ENCODE measurements at regions of chr7 and their contacts with region 1.

Region 1: DNA sequence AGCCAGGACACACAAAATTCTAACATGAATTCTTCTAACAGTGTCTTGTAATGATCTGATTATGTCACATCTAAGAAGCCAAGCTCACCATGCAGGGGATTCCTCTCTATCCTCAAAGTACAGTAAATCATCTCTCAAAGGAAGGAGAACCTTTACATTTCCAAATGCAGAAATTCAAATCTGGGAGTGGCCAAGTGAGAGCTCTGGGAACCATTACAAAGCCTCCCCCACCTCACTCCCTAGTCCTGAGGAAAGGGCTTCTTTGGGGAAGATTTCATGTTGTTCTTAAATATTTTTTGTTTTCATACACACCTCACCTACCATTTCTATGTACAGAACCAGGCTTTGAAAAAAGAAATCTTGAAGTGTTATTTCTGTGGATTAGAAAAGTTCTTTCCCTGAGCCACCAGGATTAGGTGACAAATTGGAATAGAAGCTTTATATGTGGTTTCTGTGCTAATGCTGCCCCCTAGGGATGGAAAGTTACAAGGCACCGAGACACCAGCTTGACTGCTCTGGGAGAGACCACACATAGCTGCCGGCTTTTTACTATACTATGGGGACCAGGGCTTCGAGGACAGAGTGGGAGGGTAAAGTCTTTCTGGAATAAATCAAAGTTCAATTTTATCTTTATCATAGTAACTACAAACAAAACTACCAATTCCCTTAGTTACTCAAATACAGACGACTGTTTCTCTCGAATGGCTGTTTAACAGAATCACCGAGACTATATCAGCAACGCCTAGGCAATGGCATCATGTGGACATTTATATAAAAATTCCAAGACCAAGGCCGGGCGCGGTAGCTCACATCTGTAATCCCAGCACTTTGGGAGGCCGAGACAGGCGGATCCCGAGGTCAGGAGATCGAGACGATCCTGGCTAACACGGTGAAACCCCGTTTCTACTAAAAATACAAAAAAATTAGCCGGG is 116.1 kb downstream of the RNF216 start:
- DNase-seq: peak in 8 of 9 donors; percentile 43 to 71 (median 58)
- ATAC-seq: peak; percentile 84
- H3K4me3 ChIP-seq: no peak overlapping the region
- H3K4me3 Mint-ChIP-seq: no peak overlapping the region
- H3K27ac ChIP-seq: no peak overlapping the region
- H3K27ac Mint-ChIP-seq: peak overlapping the region in 8 of 9 donors; percentile 19 to 93 (median 44)
- H3K4me1 ChIP-seq: peaks cover 0 to 5% of the 10 kb centered on the region in 2 donors
- H3K4me1 Mint-ChIP-seq: peaks cover 6 to 25% (median 24%) of the 10 kb centered on the region in 7 donors
- H3K27me3 ChIP-seq: no peaks in the 10 kb centered on the region
- H3K27me3 Mint-ChIP-seq: no peaks in the 10 kb centered on the region

Region 2: GRCh38 chr7:5172196-5172775 is 493.1 kb before region 1 on chr7:
- CTCF ChIA-PET with region 1: no interaction called
- POLR2A ChIA-PET with region 1: no interaction called
- intact Hi-C with region 1: no loop called
- DNase-seq: no peak
- ATAC-seq: no peak
- H3K4me3 ChIP-seq: no peak overlapping the region
- H3K4me3 Mint-ChIP-seq: no peak overlapping the region
- H3K27ac ChIP-seq: no peak overlapping the region
- H3K27ac Mint-ChIP-seq: peak overlapping the region in 1 of 9 donors; percentile 65
- H3K4me1 ChIP-seq: no peaks in the 10 kb centered on the region
- H3K4me1 Mint-ChIP-seq: peaks cover 4 to 31% (median 13%) of the 10 kb centered on the region in 7 donors
- H3K27me3 ChIP-seq: no peaks in the 10 kb centered on the region
- H3K27me3 Mint-ChIP-seq: peaks cover 0 to 8% (median 0%) of the 10 kb centered on the region in 5 donors

Region 3: DNA sequence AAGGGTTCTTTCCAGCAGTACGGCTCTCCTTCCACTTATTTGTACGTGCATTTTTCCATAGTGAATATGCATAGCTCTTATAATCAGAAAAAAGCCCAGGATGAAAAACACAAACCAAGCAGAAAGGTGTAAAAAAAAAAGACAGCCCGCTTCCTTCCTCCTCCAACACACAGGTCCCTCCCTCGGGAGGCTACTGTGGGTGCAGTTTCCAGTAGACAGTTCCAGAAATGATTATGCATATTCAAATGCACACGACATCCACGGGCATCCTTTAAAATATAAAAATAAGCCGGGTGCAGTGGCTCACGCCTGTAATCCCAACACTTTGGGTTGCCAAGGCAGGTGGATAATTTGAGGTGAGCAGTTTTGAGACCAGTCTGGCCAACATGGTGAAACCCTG is 301.6 kb before region 1 on chr7:
- CTCF ChIA-PET with region 1: no interaction called
- POLR2A ChIA-PET with region 1: no interaction called
- intact Hi-C with region 1: loop called in 1 of 2 experiments (anchors 10 kb)
- DNase-seq: no peak
- ATAC-seq: no peak
- H3K4me3 ChIP-seq: no peak overlapping the region
- H3K4me3 Mint-ChIP-seq: peak overlapping the region in 1 of 10 donors; percentile 8
- H3K27ac ChIP-seq: no peak overlapping the region
- H3K27ac Mint-ChIP-seq: peak overlapping the region in 2 of 9 donors; percentile 51 to 53
- H3K4me1 ChIP-seq: peaks cover 0 to 5% of the 10 kb centered on the region in 2 donors
- H3K4me1 Mint-ChIP-seq: peaks cover 5 to 20% (median 11%) of the 10 kb centered on the region in 7 donors
- H3K27me3 ChIP-seq: no peaks in the 10 kb centered on the region
- H3K27me3 Mint-ChIP-seq: no peaks in the 10 kb centered on the region

Region 4: GRCh38 chr7:5494683-5495561 is 170.4 kb before region 1 on chr7:
- CTCF ChIA-PET with region 1: interaction called, 31 read pairs
- POLR2A ChIA-PET with region 1: interaction called, 5 read pairs
- intact Hi-C with region 1: loop called (anchors 1 kb)
- DNase-seq: peak; percentile 64 to 82 (median 78)
- ATAC-seq: peak; percentile 94
- H3K4me3 ChIP-seq: peak overlapping the region; percentile 4
- H3K4me3 Mint-ChIP-seq: peak overlapping the region; percentile 14 to 67 (median 58)
- H3K27ac ChIP-seq: no peak overlapping the region
- H3K27ac Mint-ChIP-seq: peak overlapping the region in 6 of 9 donors; percentile 8 to 65 (median 47)
- H3K4me1 ChIP-seq: peaks cover 4 to 22% of the 10 kb centered on the region in 2 donors
- H3K4me1 Mint-ChIP-seq: peaks cover 16 to 37% (median 22%) of the 10 kb centered on the region in 7 donors
- H3K27me3 ChIP-seq: no peaks in the 10 kb centered on the region
- H3K27me3 Mint-ChIP-seq: no peaks in the 10 kb centered on the region

Region 5: DNA sequence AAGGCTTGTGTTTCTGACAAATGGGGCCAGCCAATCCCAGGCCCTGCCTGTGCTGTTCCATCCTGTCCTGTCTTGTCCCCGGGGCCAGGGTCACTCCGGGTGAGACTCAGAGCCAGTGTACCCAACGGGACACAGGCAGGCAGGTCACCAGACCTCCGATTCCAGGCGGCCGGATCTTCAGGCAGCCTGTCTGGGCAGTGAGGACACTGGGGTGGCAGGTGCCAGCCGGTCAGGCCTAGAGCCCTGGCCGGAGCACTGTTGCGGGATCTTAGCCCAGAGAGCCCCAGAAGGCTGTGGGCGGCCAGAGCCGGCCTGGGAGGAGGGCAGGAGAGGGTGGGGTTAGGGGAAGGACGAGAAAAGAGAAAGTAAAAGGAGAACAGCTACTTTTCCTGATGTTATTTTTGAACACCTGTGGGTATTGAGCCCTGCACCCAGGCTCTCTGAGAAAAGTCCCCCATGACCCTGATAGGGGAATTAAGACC is 107.4 kb before region 1 on chr7:
- CTCF ChIA-PET with region 1: no interaction called
- POLR2A ChIA-PET with region 1: no interaction called
- intact Hi-C with region 1: no loop called
- DNase-seq: peak in 3 of 9 donors; percentile 14 to 41 (median 23)
- ATAC-seq: no peak
- H3K4me3 ChIP-seq: peak overlapping the region; percentile 57
- H3K4me3 Mint-ChIP-seq: peak overlapping the region; percentile 82 to 91 (median 88)
- H3K27ac ChIP-seq: peak overlapping the region; percentile 85
- H3K27ac Mint-ChIP-seq: peak overlapping the region; percentile 78 to 97 (median 93)
- H3K4me1 ChIP-seq: peaks cover 39 to 47% of the 10 kb centered on the region in 2 donors
- H3K4me1 Mint-ChIP-seq: peaks cover 19 to 48% (median 41%) of the 10 kb centered on the region in 7 donors
- H3K27me3 ChIP-seq: peaks cover 0 to 4% of the 10 kb centered on the region in 2 donors
- H3K27me3 Mint-ChIP-seq: peaks cover 0 to 13% (median 0%) of the 10 kb centered on the region in 5 donors

Region 6: GRCh38 chr7:5620459-5620881 is 44.9 kb before region 1 on chr7:
- CTCF ChIA-PET with region 1: no interaction called
- POLR2A ChIA-PET with region 1: no interaction called
- intact Hi-C with region 1: no loop called
- DNase-seq: no peak
- ATAC-seq: no peak
- H3K4me3 ChIP-seq: no peak overlapping the region
- H3K4me3 Mint-ChIP-seq: no peak overlapping the region
- H3K27ac ChIP-seq: no peak overlapping the region
- H3K27ac Mint-ChIP-seq: no peak overlapping the region
- H3K4me1 ChIP-seq: no peaks in the 10 kb centered on the region
- H3K4me1 Mint-ChIP-seq: peaks cover 0 to 2% (median 0%) of the 10 kb centered on the region in 7 donors
- H3K27me3 ChIP-seq: no peaks in the 10 kb centered on the region
- H3K27me3 Mint-ChIP-seq: no peaks in the 10 kb centered on the region

Region 7: DNA sequence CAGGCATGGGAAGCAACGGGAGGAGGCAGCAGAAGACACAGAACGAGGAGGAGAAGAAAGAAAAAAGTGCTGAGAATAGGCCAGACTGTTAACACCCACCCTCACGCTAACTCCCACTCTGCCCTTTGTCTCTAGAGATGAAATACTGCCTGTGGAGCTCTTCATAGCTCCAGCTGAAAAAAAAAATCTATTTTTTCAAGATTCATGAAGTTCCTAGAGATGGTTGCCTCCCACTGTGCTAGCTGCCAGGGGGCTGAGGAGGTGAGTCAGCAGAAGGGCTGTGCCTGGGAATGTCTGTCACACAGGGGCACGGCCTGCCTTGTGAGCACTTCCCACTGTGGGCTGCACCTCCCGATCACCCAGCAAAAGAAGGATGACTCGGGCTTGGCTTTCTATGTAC is 28.4 kb before region 1 on chr7:
- CTCF ChIA-PET with region 1: interaction called, 4 read pairs
- POLR2A ChIA-PET with region 1: no interaction called
- intact Hi-C with region 1: loop called in 1 of 2 experiments (anchors 5 kb)
- DNase-seq: no peak
- ATAC-seq: no peak
- H3K4me3 ChIP-seq: no peak overlapping the region
- H3K4me3 Mint-ChIP-seq: no peak overlapping the region
- H3K27ac ChIP-seq: no peak overlapping the region
- H3K27ac Mint-ChIP-seq: peak overlapping the region in 5 of 9 donors; percentile 19 to 86 (median 54)
- H3K4me1 ChIP-seq: peaks cover 5 to 13% of the 10 kb centered on the region in 2 donors
- H3K4me1 Mint-ChIP-seq: peaks cover 11 to 45% (median 35%) of the 10 kb centered on the region in 7 donors
- H3K27me3 ChIP-seq: no peaks in the 10 kb centered on the region
- H3K27me3 Mint-ChIP-seq: no peaks in the 10 kb centered on the region

Region 8: DNA sequence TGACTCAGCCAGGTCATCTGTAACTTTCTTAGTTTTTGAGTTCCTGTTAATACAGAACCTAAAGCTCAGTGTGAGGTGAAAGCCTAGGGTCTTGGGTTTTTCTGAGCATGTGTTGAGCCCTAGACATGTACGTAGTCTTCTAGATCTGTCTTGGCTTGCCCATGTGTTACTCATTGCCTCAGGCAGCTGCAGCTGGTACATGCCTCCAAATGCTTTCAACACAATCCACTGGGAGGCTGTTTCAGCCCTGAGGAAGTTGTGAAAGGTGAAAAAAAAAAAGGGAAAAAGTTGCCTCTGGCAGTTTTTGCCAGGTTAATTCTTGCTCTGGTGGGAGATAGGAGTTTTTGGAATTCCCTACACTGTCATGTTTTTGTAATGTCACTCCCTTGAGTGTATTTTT is 18.5 kb before region 1 on chr7:
- CTCF ChIA-PET with region 1: interaction called, 5 read pairs
- POLR2A ChIA-PET with region 1: no interaction called
- intact Hi-C with region 1: loop called in 1 of 2 experiments (anchors 1 kb)
- DNase-seq: no peak
- ATAC-seq: no peak
- H3K4me3 ChIP-seq: no peak overlapping the region
- H3K4me3 Mint-ChIP-seq: no peak overlapping the region
- H3K27ac ChIP-seq: no peak overlapping the region
- H3K27ac Mint-ChIP-seq: peak overlapping the region in 2 of 9 donors; percentile 16 to 63
- H3K4me1 ChIP-seq: peaks cover 16 to 28% of the 10 kb centered on the region in 2 donors
- H3K4me1 Mint-ChIP-seq: peaks cover 25 to 38% (median 35%) of the 10 kb centered on the region in 7 donors
- H3K27me3 ChIP-seq: no peaks in the 10 kb centered on the region
- H3K27me3 Mint-ChIP-seq: no peaks in the 10 kb centered on the region

Region 9: GRCh38 chr7:5677538-5678294 is 12.4 kb after region 1 on chr7:
- CTCF ChIA-PET with region 1: interaction called, 13 read pairs
- POLR2A ChIA-PET with region 1: no interaction called
- intact Hi-C with region 1: loop called in 1 of 2 experiments (anchors 2 kb)
- DNase-seq: peak in 3 of 9 donors; percentile 34 to 47 (median 42)
- ATAC-seq: peak; percentile 67
- H3K4me3 ChIP-seq: no peak overlapping the region
- H3K4me3 Mint-ChIP-seq: peak overlapping the region in 1 of 10 donors; percentile 1
- H3K27ac ChIP-seq: no peak overlapping the region
- H3K27ac Mint-ChIP-seq: peak overlapping the region in 7 of 9 donors; percentile 2 to 68 (median 34)
- H3K4me1 ChIP-seq: peaks cover 5 to 14% of the 10 kb centered on the region in 2 donors
- H3K4me1 Mint-ChIP-seq: peaks cover 40 to 68% (median 57%) of the 10 kb centered on the region in 7 donors
- H3K27me3 ChIP-seq: no peaks in the 10 kb centered on the region
- H3K27me3 Mint-ChIP-seq: no peaks in the 10 kb centered on the region

Region 10: DNA sequence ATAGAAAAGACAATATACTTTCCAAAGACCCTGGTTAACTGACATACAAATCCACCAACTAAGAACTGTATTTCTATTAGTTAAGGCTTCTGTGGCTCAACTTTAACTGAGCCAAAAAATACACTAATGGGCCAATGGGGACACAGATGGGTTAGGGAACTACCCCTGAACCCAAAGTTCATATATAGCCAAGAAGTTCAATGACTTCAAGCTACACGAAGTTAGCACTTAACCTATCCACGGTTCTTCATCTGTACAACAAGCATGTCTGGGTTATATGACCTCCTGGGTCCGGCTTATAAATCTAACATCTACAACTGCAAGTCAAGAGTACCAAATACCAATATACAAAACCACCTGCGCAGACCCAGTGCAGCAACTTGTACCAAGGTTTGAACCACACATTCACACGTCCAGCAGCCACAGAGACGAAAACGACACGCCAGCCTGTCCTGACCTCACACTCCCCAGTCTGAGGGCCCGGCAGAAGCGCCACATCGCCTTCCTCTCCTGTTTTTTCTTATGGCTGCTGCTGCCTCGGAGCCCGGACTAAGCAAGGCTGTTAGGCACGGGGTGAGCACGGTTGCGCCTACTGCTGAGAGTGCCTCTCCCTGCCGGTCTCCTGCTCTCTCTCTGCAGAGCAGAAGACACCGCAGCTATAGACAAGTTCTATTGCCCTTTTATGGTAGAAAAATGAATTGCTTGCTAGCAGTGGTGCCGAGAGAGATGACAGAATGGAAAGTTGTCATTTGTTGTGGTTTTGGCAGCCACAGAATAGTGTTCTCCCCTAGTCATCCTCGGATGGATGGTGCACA is 29.8 kb after region 1 on chr7:
- CTCF ChIA-PET with region 1: interaction called, 18 read pairs
- POLR2A ChIA-PET with region 1: interaction called, 4 read pairs
- intact Hi-C with region 1: loop called in 1 of 2 experiments (anchors 2 kb)
- DNase-seq: peak; percentile 38 to 91 (median 81)
- ATAC-seq: peak; percentile 75
- H3K4me3 ChIP-seq: peak overlapping the region; percentile 60
- H3K4me3 Mint-ChIP-seq: peak overlapping the region; percentile 88 to 99 (median 96)
- H3K27ac ChIP-seq: peak overlapping the region; percentile 86
- H3K27ac Mint-ChIP-seq: peak overlapping the region; percentile 89 to 99 (median 94)
- H3K4me1 ChIP-seq: peaks cover 45 to 88% of the 10 kb centered on the region in 2 donors
- H3K4me1 Mint-ChIP-seq: peaks cover 84 to 100% (median 93%) of the 10 kb centered on the region in 7 donors
- H3K27me3 ChIP-seq: no peaks in the 10 kb centered on the region
- H3K27me3 Mint-ChIP-seq: peaks cover 0 to 10% (median 0%) of the 10 kb centered on the region in 5 donors

Measured in naive thymus-derived CD4-positive, alpha-beta T cell (primary cell).